ENCODE measurements at regions of chr19 and their contacts with region 1.

Region 1: GRCh38 chr19:16247353-16248182 is 49.9 kb downstream of the AP1M1 start:
- DNase-seq: peak; percentile 90
- H3K4me3 Mint-ChIP-seq: no peak overlapping the region
- H3K27ac Mint-ChIP-seq: peak overlapping the region; percentile 67
- H3K4me1 Mint-ChIP-seq: peaks cover 30% of the 10 kb centered on the region
- H3K27me3 Mint-ChIP-seq: peaks cover 12% of the 10 kb centered on the region

Region 2: GRCh38 chr19:16330368-16330801 is 82.8 kb after region 1 on chr19:
- CTCF ChIA-PET with region 1: interaction called, 18 read pairs
- DNase-seq: peak; percentile 97
- H3K4me3 Mint-ChIP-seq: peak overlapping the region; percentile 100
- H3K27ac Mint-ChIP-seq: peak overlapping the region; percentile 100
- H3K4me1 Mint-ChIP-seq: peaks cover 51% of the 10 kb centered on the region
- H3K27me3 Mint-ChIP-seq: peaks cover 38% of the 10 kb centered on the region

Region 3: DNA sequence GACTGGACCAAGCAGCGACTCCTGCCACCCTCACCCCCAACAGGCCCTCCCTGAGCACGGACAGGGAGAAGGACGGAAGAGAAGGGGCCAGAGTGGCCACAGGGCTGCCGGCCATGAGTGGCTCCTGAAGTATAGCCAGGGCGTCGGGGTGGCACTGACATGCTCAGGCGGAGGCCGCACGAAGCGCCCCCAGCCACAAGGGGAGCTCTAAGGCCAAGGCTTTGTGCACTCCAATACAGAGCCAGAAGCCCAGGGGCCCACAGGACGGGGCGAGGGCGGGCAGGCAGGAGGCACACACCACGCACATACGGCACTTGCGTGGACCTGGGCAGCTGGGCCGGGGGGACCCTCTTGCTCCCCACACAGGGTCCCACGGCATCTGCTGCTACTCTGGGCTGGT is 129.1 kb after region 1 on chr19:
- CTCF ChIA-PET with region 1: interaction called, 110 read pairs
- DNase-seq: peak; percentile 55
- H3K4me3 Mint-ChIP-seq: no peak overlapping the region
- H3K27ac Mint-ChIP-seq: peak overlapping the region; percentile 78
- H3K4me1 Mint-ChIP-seq: peaks cover 19% of the 10 kb centered on the region
- H3K27me3 Mint-ChIP-seq: no peaks in the 10 kb centered on the region

Region 4: DNA sequence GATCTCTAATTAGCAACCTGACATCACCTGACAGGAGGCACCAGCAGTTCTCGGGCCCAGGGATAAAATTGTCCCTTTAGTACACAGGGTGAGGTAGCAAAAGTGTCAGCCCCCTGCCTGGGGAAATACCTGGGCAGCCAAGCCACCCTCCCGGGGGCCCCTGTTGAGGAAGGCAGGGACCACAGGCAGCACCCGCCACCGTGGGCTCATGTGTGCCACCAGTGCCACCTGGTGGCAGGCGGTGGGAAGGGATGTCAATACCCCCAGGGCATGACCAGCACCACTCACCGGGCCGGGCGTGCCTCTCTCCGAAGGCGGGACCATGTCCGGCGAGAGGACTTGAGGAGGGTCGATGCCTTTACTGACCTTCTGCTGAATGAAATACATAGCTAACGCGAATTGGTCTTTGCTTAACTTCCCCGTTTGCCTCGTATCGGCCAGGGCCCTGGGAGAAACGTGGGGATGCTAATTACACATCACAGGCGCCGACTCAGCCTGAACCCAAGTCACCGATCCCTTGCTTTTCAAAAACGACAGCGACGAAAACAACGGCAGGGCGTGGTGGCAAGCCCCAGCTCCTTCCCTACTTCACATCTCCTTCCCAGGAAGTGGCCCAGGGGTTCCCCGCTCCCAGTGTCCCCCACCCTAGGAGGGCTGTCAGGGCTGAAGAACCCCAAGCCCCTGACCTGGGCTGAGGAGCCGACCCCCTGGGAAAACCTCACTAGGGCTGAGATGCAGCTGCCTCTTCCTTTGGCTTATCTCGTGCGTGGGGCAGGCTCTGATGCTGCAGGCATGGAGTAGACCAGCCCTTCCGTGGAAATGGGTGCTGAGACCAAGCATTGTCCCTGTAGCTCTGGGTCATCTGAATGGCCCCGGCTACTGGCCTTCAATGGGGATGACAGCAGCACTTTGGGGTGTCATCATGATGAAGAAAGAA is 170.4 kb after region 1 on chr19:
- CTCF ChIA-PET with region 1: interaction called, 20 read pairs
- DNase-seq: peak; percentile 75
- H3K4me3 Mint-ChIP-seq: no peak overlapping the region
- H3K27ac Mint-ChIP-seq: no peak overlapping the region
- H3K4me1 Mint-ChIP-seq: no peaks in the 10 kb centered on the region
- H3K27me3 Mint-ChIP-seq: no peaks in the 10 kb centered on the region

Measured in activated naive CD4-positive, alpha-beta T cell treated with anti-CD3 and anti-CD28 coated beads, Interleukin-2, amount 10 ng/mL, durations not matched to agents 7 days and 5 days (primary cell).